ENCODE measurements at regions of chr11 and their contacts with region 1.

Region 1: GRCh38 chr11:74398244-74399159 is at the start of gene PGM2L1:
- DNase-seq: peak; percentile 98
- ATAC-seq: peak; percentile 86
- H3K4me3 ChIP-seq: peak within 1 kb of the TSS; percentile 58 to 94 (median 89)
- H3K4me3 Mint-ChIP-seq: peak within 1 kb of the TSS; percentile 95
- H3K27ac ChIP-seq: peak within 1 kb of the TSS; percentile 66 to 87
- H3K27ac Mint-ChIP-seq: peak within 1 kb of the TSS; percentile 98
- H3K4me1 ChIP-seq: peaks cover 10% of the 10 kb centered on the region in 2 donors
- H3K4me1 Mint-ChIP-seq: peaks cover 14% of the 10 kb centered on the region
- H3K27me3 ChIP-seq: no peaks in the 10 kb centered on the region
- H3K27me3 Mint-ChIP-seq: no peaks in the 10 kb centered on the region
- CTCF ChIP-seq: no peak
- total RNA-seq, gene PGM2L1: 8.4 and 12.6 TPM in 2 replicates

Region 2: DNA sequence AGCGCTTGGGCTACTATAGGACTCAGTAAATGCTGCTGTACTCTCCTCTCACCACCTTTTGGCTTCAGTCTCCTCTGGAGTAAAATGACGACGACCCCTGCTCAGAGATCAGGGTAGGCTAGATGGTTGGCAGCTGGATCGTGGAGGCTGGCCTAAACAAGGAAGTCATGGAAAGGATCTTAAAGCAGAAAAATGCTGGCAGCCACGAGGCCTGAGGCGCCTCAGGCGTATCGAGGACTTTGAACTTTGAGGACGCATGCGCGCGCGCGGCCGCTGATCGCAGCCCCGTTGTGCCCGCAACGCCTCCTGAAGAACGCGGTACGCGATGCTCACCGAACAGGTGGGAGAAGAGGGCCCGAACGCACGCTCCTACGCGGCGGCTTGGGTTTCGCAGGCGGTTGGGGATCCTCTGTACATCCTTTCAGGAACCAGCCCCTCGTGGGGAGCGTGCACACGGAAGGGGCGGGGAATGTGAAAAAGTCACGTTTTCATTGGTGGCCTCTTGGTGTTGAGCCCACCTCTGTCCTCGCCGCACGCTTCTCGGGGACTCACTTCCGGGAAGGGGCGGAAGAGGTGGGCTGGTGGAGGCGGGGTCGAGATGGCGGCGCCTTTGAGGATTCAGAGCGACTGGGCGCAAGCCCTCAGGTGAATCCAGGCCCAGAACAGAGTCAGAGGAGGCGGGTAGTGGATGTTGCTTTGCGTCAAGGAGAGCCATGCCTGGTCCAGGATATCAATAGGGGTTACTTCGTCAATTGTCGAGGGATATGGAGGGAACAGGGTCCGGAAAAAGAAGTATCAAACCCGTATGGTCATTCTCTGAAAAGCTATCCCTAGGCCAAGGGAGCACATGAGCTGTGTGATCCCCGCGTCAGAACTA is 521.8 kb before region 1 on chr11 and contains the starts of genes COA4 and PAAF1:
- CTCF ChIA-PET with region 1: no interaction called
- POLR2A ChIA-PET with region 1: no interaction called
- intact Hi-C with region 1: no loop called
- DNase-seq: peak; percentile 97
- ATAC-seq: peak; percentile 98
- H3K4me3 ChIP-seq: peak within 1 kb of the TSS; percentile 76 to 88 (median 83)
- H3K4me3 Mint-ChIP-seq: peak within 1 kb of the TSS; percentile 99
- H3K27ac ChIP-seq: peak within 1 kb of the TSS; percentile 45 to 71
- H3K27ac Mint-ChIP-seq: peak within 1 kb of the TSS; percentile 99
- H3K4me1 ChIP-seq: peaks cover 19 to 24% of the 10 kb centered on the region in 2 donors
- H3K4me1 Mint-ChIP-seq: peaks cover 31% of the 10 kb centered on the region
- H3K27me3 ChIP-seq: no peaks in the 10 kb centered on the region
- H3K27me3 Mint-ChIP-seq: no peaks in the 10 kb centered on the region
- CTCF ChIP-seq: no peak
- total RNA-seq, gene COA4: 59.6 and 60.5 TPM in 2 replicates
- total RNA-seq, gene PAAF1: 19.5 and 19.9 TPM in 2 replicates

Region 3: DNA sequence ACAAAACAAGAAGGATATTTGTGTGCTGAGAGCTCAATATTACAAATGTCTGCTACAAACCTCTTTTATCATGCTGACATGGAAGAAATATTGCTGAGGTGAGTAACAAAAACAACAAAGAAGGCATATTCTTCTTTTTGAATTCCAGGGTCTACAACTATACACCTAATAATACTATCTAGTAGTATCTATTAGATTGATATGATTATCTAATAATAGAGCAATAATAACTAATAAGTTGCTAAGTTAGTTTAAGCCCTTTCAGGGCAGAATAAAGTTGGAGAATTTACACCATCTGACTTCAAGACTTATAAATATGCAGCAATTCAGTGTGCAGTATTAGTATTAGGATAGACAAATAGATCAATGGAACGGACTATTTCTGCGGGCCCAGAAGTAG is 11.1 kb after region 1 on chr11:
- CTCF ChIA-PET with region 1: interaction called, 16 read pairs
- POLR2A ChIA-PET with region 1: no interaction called
- intact Hi-C with region 1: no loop called
- DNase-seq: no peak
- ATAC-seq: no peak
- H3K4me3 ChIP-seq: no peak overlapping the region
- H3K4me3 Mint-ChIP-seq: no peak overlapping the region
- H3K27ac ChIP-seq: no peak overlapping the region
- H3K27ac Mint-ChIP-seq: no peak overlapping the region
- H3K4me1 ChIP-seq: no peaks in the 10 kb centered on the region
- H3K4me1 Mint-ChIP-seq: no peaks in the 10 kb centered on the region
- H3K27me3 ChIP-seq: peaks cover 0 to 3% (median 0%) of the 10 kb centered on the region in 4 experiments
- H3K27me3 Mint-ChIP-seq: peaks cover 38% of the 10 kb centered on the region
- CTCF ChIP-seq: no peak

Region 4: GRCh38 chr11:74492974-74493790 is 94.7 kb after region 1 on chr11 and contains the start of gene LIPT2:
- CTCF ChIA-PET with region 1: interaction called, 6 read pairs
- POLR2A ChIA-PET with region 1: interaction called, 11 read pairs
- intact Hi-C with region 1: loop called (anchors 1 kb)
- DNase-seq: peak; percentile 98
- ATAC-seq: peak; percentile 94
- H3K4me3 ChIP-seq: peak within 1 kb of the TSS; percentile 32 to 79 (median 75)
- H3K4me3 Mint-ChIP-seq: peak within 1 kb of the TSS; percentile 90
- H3K27ac ChIP-seq: peak within 1 kb of the TSS; percentile 47 to 78
- H3K27ac Mint-ChIP-seq: peak within 1 kb of the TSS; percentile 94
- H3K4me1 ChIP-seq: peaks cover 7 to 14% of the 10 kb centered on the region in 2 donors
- H3K4me1 Mint-ChIP-seq: peaks cover 13% of the 10 kb centered on the region
- H3K27me3 ChIP-seq: no peaks in the 10 kb centered on the region
- H3K27me3 Mint-ChIP-seq: no peaks in the 10 kb centered on the region
- CTCF ChIP-seq: no peak
- total RNA-seq, gene LIPT2: 6.5 and 20.2 TPM in 2 replicates

Region 5: DNA sequence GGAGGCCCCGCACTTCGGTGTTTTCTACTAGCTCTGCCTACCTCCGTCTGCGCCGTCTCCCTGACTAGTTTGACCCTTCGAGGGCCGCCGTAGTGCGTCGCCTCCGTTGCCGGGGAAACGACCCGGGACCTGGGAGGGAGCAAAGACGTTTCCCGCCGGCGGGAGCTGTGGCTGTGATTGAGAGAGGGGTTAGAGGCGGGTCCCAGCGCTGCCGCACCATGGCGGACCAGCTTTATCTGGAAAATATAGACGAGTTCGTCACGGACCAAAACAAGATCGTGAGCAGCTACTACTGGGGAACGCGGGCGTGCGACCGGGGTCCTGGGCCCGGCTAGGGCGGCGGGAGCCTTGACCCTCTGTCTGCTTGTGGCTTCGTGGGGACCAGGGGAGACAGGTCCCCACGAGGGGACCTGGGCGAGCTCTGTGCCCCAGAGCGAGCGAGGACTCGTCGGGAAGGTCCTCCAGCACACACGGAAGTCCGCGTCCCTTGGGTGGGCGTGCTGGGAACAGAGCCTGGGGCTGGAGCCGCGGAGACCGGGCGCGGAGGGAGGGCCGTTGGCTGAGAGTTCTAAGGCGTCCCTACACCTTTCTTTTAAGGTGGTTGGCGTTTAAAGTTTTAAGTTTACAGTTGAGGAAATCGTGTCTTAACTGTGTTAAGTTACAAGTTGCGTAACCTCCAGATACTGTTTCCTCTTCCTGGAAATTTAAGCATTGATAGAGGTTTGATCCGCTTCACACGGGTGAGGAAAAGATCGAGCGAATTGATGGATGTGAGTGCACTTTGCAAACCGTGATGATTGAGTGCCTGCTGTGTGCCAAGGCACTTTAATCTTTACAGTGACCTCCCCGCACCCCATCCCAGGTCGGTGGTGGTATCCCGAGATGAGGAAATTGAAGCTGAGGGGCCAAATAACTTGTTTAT is 194.2 kb after region 1 on chr11 and contains the start of gene POLD3:
- CTCF ChIA-PET with region 1: no interaction called
- POLR2A ChIA-PET with region 1: no interaction called
- intact Hi-C with region 1: loop called (anchors 2 kb)
- DNase-seq: peak; percentile 91
- ATAC-seq: peak; percentile 97
- H3K4me3 ChIP-seq: peak within 1 kb of the TSS; percentile 82 to 99 (median 94)
- H3K4me3 Mint-ChIP-seq: peak within 1 kb of the TSS; percentile 100
- H3K27ac ChIP-seq: peak within 1 kb of the TSS; percentile 47 to 84
- H3K27ac Mint-ChIP-seq: peak within 1 kb of the TSS; percentile 97
- H3K4me1 ChIP-seq: peaks cover 10 to 13% of the 10 kb centered on the region in 2 donors
- H3K4me1 Mint-ChIP-seq: peaks cover 21% of the 10 kb centered on the region
- H3K27me3 ChIP-seq: no peaks in the 10 kb centered on the region
- H3K27me3 Mint-ChIP-seq: no peaks in the 10 kb centered on the region
- CTCF ChIP-seq: no peak
- total RNA-seq, gene POLD3: 13.5 and 17.6 TPM in 2 replicates

Measured in B cell (primary cell).